Thyroid gland (tissue), 4 donors: ENCODE measurements at regions of chr4 and their contacts with region 1.

Region 1: GRCh38 chr4:163484906-163485305 is 9.6 kb upstream of the TMA16 start:
- DNase-seq: peak; percentile 29 to 31
- H3K4me3 ChIP-seq: no peak overlapping the region
- H3K27ac ChIP-seq: no peak overlapping the region
- H3K4me1 ChIP-seq: no peaks in the 10 kb centered on the region
- H3K27me3 ChIP-seq: no peaks in the 10 kb centered on the region
- CTCF ChIP-seq: peak in 4 of 6 experiments; percentile 13 to 49 (median 43)
- POLR2A ChIP-seq: no peak

Region 2: DNA sequence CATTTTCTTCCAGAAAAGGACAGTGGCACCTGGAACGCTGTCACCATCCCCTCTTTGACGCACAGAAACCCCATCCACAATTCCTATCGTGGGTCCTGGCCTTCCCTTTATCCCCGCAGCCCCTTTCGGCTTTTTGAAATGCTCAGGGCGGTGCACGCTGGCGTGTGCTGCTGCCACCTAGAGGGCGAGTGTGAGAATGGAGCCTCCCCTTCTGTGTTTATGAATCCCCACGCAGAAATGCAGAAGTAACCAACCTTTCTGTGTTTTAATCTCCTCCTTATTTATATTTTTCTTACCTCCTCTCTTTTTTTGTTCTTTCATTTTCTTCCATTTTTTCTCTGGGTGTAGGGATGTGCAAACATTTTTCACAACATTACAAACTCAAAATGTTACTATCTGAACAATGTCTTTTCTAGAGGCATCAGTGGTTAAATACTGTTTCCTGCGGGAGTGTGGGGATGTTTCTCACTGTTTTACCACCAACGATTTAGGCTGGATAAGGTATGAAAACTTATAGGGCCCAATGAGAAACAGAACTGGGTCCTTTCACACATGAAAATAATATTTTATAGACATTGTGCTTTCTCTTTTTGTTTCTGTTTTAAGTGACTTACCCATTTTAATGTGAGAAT is 59.6 kb after region 1 on chr4:
- intact Hi-C with region 1: loop called (anchors 5 kb)
- DNase-seq: peak; percentile 29 to 35
- H3K4me3 ChIP-seq: no peak overlapping the region
- H3K27ac ChIP-seq: no peak overlapping the region
- H3K4me1 ChIP-seq: no peaks in the 10 kb centered on the region
- H3K27me3 ChIP-seq: no peaks in the 10 kb centered on the region
- CTCF ChIP-seq: peak; percentile 55 to 95 (median 61)
- POLR2A ChIP-seq: no peak

Region 3: DNA sequence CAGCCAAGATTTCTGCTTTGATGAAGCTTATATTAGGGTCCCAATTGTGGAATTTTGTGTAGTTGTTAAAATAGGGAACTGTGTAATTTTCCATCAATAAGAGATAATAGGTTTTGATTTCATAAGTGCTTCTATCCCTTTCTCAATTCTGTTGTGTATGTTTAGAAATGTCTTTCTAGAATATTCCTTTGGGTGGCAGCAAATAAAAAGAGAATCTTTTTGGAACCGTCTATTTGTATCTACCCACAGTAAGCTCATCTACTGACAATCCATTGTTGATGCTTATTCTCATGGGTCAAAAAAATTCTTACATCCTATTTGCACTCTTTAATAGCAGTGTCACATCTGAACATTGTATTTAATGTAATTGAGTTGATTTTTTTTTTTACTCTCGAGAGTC is 71.3 kb after region 1 on chr4:
- intact Hi-C with region 1: no loop called
- DNase-seq: no peak
- H3K4me3 ChIP-seq: no peak overlapping the region
- H3K27ac ChIP-seq: no peak overlapping the region
- H3K4me1 ChIP-seq: no peaks in the 10 kb centered on the region
- H3K27me3 ChIP-seq: no peaks in the 10 kb centered on the region
- CTCF ChIP-seq: no peak
- POLR2A ChIP-seq: no peak